Breast epithelium (tissue), 4 donors: ENCODE measurements at regions of chr12 and their contacts with region 1.

Region 1: DNA sequence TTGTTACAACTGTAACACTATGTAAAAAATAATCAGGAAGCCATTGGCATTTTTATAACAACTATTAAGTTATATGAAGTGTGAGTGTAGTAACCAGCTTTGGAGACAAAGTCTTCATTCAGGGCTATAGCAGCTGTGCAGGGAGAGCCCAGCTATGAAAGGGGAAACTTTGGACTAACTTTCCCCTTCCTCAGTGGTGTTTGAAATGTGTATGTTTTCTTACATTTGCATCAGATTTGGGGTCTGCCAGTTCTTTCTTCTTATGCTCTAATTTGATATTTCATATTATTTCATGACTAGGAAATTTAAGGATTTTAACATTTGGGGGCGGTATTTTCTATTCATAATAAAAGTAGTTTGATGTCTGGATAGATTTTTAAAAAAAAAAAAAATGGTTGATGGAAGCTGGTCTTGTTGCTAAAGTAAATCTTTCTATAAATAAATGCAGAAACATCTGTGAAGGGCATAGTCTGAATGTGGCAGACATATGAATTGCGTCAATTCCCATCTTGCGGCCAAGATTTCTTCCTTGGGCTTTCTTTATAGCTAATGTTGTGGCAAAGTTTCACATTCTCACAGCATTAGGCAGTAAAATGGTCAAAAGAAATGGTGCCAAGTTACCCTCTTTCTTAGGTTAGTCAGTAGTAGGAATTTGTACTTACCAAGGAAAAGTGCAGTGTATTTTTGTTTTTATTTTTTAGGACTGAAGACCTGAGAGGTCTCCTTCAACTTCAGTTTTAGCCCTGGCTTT is 35.6 kb downstream of the RASSF8 start:
- DNase-seq: no peak
- H3K4me3 ChIP-seq: no peak overlapping the region
- H3K27ac ChIP-seq: no peak overlapping the region
- H3K4me1 ChIP-seq: no peaks in the 10 kb centered on the region
- H3K27me3 ChIP-seq: no peaks in the 10 kb centered on the region
- CTCF ChIP-seq: no peak
- POLR2A ChIP-seq: no peak

Region 2: DNA sequence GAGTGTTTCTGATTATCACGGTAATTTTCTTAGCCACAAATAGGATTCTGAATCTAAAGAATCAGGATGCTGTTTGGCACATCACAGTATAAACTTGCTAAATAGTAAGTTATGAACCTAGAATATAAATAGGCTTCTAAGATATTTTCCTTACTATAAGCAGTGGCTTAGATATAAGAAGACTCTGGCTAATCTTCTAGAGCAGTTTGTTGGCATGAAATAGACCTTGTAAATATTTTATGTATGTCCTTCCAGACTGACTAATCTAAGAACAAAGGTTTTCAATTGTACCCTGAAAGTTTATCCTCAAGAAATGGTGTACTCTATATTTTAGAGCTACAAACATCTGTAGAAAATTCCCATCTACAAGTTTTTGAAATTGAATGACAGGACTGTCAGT is 489.3 kb before region 1 on chr12:
- intact Hi-C with region 1: no loop called
- DNase-seq: no peak
- H3K4me3 ChIP-seq: no peak overlapping the region
- H3K27ac ChIP-seq: no peak overlapping the region
- H3K4me1 ChIP-seq: no peaks in the 10 kb centered on the region
- H3K27me3 ChIP-seq: no peaks in the 10 kb centered on the region
- CTCF ChIP-seq: no peak
- POLR2A ChIP-seq: no peak

Region 3: GRCh38 chr12:25677232-25677937 is 316.7 kb before region 1 on chr12:
- intact Hi-C with region 1: no loop called
- DNase-seq: no peak
- H3K4me3 ChIP-seq: no peak overlapping the region
- H3K27ac ChIP-seq: no peak overlapping the region
- H3K4me1 ChIP-seq: no peaks in the 10 kb centered on the region
- H3K27me3 ChIP-seq: no peaks in the 10 kb centered on the region
- CTCF ChIP-seq: no peak
- POLR2A ChIP-seq: no peak

Region 4: GRCh38 chr12:25958428-25959070 is 35.5 kb before region 1 on chr12 and contains the start of gene RASSF8:
- intact Hi-C with region 1: no loop called
- DNase-seq: peak; percentile 39 to 53
- H3K4me3 ChIP-seq: peak within 1 kb of the TSS; percentile 75 to 92 (median 83)
- H3K27ac ChIP-seq: peak within 1 kb of the TSS; percentile 89 to 98
- H3K4me1 ChIP-seq: no peaks in the 10 kb centered on the region
- H3K27me3 ChIP-seq: no peaks in the 10 kb centered on the region
- CTCF ChIP-seq: no peak
- POLR2A ChIP-seq: no peak
- total RNA-seq, gene RASSF8: 42.6 to 52.1 (median 47.5) TPM

Region 5: DNA sequence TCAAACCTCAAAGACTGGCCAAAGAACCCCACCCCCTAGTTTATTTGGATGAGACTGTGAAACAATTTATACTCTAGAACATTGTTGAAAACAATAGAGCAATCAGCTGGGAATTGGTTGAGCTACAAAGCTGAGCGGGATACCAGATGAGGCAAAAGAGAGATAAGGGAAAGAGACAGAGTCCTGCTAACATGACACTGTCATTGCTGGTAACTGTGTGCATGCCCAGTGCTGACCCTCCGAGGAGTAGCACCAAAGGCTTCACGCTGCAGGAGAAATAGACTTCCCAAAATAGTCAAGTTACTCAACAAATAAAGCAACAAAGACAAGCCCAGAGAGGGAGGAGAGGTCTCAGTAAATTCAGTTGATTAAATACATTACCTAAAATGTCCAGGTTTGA is 28.0 kb after region 1 on chr12:
- intact Hi-C with region 1: loop called (anchors 2 kb)
- DNase-seq: no peak
- H3K4me3 ChIP-seq: no peak overlapping the region
- H3K27ac ChIP-seq: no peak overlapping the region
- H3K4me1 ChIP-seq: no peaks in the 10 kb centered on the region
- H3K27me3 ChIP-seq: no peaks in the 10 kb centered on the region
- CTCF ChIP-seq: no peak
- POLR2A ChIP-seq: no peak